ENCODE measurements at regions of chr19 and their contacts with region 1.

Region 1: GRCh38 chr19:17751103-17751911 is at the start of gene FCHO1:
- DNase-seq: peak; percentile 93
- H3K4me3 Mint-ChIP-seq: peak within 1 kb of the TSS; percentile 86
- H3K27ac Mint-ChIP-seq: peak within 1 kb of the TSS; percentile 83
- H3K4me1 Mint-ChIP-seq: peaks cover 65% of the 10 kb centered on the region
- H3K27me3 Mint-ChIP-seq: no peaks in the 10 kb centered on the region
- total RNA-seq, gene FCHO1: 64.8 to 76.7 TPM

Region 2: GRCh38 chr19:17687857-17688784 is 63.2 kb before region 1 on chr19 and contains the start of gene UNC13A:
- CTCF ChIA-PET with region 1: no interaction called
- POLR2A ChIA-PET with region 1: no interaction called
- DNase-seq: peak; percentile 48
- H3K4me3 Mint-ChIP-seq: no peak within 1 kb of the TSS
- H3K27ac Mint-ChIP-seq: no peak within 1 kb of the TSS
- H3K4me1 Mint-ChIP-seq: peaks cover 7% of the 10 kb centered on the region
- H3K27me3 Mint-ChIP-seq: peaks cover 66% of the 10 kb centered on the region
- total RNA-seq, gene UNC13A: 0.03 TPM in 1 of 2 experiments, not detected in the other

Region 3: DNA sequence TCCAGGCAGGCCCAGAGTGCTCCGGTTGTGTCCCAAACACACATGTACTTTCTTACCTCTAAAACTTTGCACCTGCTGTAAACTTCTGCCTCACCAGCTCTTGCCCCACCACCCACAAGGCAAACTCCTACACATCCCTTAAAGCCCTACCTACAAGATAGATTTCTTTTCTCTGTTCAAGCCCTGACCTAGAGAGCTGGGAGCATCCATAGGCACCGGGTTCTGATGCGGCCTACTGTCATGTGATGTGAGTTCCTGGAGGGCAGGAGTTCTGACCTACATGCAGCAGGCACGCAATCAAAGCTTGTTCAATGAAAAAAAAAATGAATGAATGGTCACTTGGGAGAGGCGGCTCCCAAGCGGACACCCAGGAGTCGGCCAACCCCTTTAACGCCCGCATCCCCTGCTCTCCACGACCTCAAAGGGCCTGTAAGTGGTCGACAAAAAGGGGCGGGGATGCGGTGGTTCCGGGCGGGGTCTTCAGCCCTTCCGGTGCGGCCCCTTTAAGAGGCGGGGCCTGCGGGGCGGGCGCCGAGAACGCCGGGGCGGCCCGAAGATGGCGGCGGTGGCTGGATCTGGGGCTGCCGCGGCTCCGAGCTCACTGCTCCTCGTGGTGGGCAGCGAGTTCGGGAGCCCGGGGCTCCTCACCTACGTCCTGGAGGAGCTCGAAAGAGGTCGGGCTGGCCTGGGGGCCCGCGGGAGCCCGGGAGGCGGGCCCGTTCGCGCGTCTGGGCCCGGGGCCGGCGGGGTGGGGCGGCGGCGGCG is 32.2 kb before region 1 on chr19 and contains the start of gene MAP1S:
- CTCF ChIA-PET with region 1: interaction called, 3 read pairs
- POLR2A ChIA-PET with region 1: interaction called, 23 read pairs
- DNase-seq: peak; percentile 73
- H3K4me3 Mint-ChIP-seq: peak within 1 kb of the TSS; percentile 84
- H3K27ac Mint-ChIP-seq: peak within 1 kb of the TSS; percentile 75
- H3K4me1 Mint-ChIP-seq: peaks cover 38% of the 10 kb centered on the region
- H3K27me3 Mint-ChIP-seq: no peaks in the 10 kb centered on the region
- total RNA-seq, gene MAP1S: 66.2 to 76.2 TPM

Region 4: DNA sequence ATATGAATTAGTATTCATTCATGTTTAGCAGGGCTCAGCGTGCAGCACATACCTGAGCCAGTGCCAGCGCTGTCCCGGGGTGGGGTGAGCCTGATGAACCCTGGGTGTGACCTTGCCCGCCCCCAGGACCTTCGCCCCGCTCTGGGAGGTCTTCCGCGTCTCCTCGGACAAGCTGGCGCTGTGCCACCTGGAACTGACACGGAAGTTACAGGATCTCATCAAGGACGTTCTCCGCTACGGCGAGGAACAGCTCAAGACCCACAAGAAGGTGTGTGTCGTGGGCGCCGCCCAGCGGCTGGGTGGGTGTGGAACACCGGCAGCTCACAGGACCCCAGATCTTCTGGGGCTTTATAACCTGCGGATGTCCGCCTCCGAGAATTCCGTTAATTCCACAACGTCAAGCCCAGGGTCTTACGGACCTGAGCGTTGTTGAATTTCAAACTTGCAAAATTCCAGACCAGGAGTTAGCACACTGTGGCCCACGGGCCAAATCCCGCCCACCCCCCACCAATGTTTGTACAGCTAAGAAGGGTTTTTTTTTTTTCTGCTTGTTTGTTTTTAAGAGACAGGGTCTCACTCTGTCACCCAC is 15.3 kb after region 1 on chr19:
- CTCF ChIA-PET with region 1: interaction called, 10 read pairs
- POLR2A ChIA-PET with region 1: interaction called, 4 read pairs
- DNase-seq: no peak
- H3K4me3 Mint-ChIP-seq: no peak overlapping the region
- H3K27ac Mint-ChIP-seq: no peak overlapping the region
- H3K4me1 Mint-ChIP-seq: peaks cover 8% of the 10 kb centered on the region
- H3K27me3 Mint-ChIP-seq: no peaks in the 10 kb centered on the region

Region 5: DNA sequence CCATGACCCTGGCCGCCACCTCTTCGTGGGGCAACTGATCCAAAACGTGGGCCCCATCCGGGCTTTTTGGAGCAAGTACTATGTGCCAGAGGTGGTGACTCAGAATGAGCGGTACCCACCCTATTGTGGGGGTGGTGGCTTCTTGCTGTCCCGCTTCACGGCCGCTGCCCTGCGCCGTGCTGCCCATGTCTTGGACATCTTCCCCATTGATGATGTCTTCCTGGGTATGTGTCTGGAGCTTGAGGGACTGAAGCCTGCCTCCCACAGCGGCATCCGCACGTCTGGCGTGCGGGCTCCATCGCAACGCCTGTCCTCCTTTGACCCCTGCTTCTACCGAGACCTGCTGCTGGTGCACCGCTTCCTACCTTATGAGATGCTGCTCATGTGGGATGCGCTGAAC is 60.4 kb after region 1 on chr19:
- CTCF ChIA-PET with region 1: no interaction called
- POLR2A ChIA-PET with region 1: no interaction called
- DNase-seq: no peak
- H3K4me3 Mint-ChIP-seq: no peak overlapping the region
- H3K27ac Mint-ChIP-seq: no peak overlapping the region
- H3K4me1 Mint-ChIP-seq: peaks cover 16% of the 10 kb centered on the region
- H3K27me3 Mint-ChIP-seq: peaks cover 11% of the 10 kb centered on the region

Measured in activated CD4-positive, alpha-beta memory T cell treated with anti-CD3 and anti-CD28 coated beads, Interleukin-2, amount 10 ng/mL, durations not matched to agents 7 days and 5 days (primary cell).